ENCODE measurements at regions of chr5 and their contacts with region 1.

Region 1: GRCh38 chr5:181260387-181261319 is at the start of gene TRIM52:
- DNase-seq: peak; percentile 84 to 96 (median 89)
- ATAC-seq: peak; percentile 73
- H3K4me3 ChIP-seq: peak within 1 kb of the TSS; percentile 85
- H3K4me3 Mint-ChIP-seq: peak within 1 kb of the TSS; percentile 100
- H3K27ac ChIP-seq: peak within 1 kb of the TSS; percentile 98 to 99
- H3K27ac Mint-ChIP-seq: peak within 1 kb of the TSS; percentile 95
- H3K4me1 ChIP-seq: peaks cover 43% of the 10 kb centered on the region
- H3K4me1 Mint-ChIP-seq: peaks cover 54% of the 10 kb centered on the region
- H3K27me3 ChIP-seq: no peaks in the 10 kb centered on the region
- H3K27me3 Mint-ChIP-seq: no peaks in the 10 kb centered on the region
- CTCF ChIP-seq: no peak
- total RNA-seq, gene TRIM52: 35.9 to 37.6 TPM

Region 2: DNA sequence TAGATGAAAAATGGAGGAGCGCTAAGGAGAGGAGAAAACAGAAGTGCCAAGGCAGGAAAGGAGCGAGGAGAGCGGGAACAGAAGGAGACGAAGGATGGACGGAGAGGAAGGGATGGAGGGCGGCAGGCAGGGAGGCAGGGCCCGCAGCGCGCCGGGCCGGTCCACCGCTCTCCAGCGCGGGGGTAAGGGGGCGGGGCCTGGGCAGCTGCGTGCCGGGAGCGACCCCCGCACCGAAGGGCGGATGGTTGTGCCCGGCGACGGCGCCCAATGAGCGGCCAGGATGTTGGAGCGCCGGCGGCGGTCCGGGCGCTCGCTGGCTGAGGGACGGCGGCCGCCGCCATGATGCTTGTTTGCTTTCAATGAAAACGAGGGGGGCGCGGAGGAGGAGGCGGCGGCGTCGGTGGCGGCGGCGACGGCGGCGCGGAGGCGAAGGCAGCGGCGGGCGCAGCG is 766.6 kb before region 1 on chr5 and contains the start of gene CNOT6:
- CTCF ChIA-PET with region 1: no interaction called
- POLR2A ChIA-PET with region 1: no interaction called
- intact Hi-C with region 1: loop called in 1 of 2 experiments (anchors 10 kb)
- DNase-seq: peak; percentile 89 to 99 (median 94)
- ATAC-seq: peak; percentile 88
- H3K4me3 ChIP-seq: peak within 1 kb of the TSS; percentile 73
- H3K4me3 Mint-ChIP-seq: peak within 1 kb of the TSS; percentile 100
- H3K27ac ChIP-seq: peak within 1 kb of the TSS; percentile 60 to 83
- H3K27ac Mint-ChIP-seq: peak within 1 kb of the TSS; percentile 98
- H3K4me1 ChIP-seq: peaks cover 34% of the 10 kb centered on the region
- H3K4me1 Mint-ChIP-seq: peaks cover 40% of the 10 kb centered on the region
- H3K27me3 ChIP-seq: no peaks in the 10 kb centered on the region
- H3K27me3 Mint-ChIP-seq: no peaks in the 10 kb centered on the region
- CTCF ChIP-seq: no peak
- total RNA-seq, gene CNOT6: 12.5 to 13.8 TPM

Region 3: DNA sequence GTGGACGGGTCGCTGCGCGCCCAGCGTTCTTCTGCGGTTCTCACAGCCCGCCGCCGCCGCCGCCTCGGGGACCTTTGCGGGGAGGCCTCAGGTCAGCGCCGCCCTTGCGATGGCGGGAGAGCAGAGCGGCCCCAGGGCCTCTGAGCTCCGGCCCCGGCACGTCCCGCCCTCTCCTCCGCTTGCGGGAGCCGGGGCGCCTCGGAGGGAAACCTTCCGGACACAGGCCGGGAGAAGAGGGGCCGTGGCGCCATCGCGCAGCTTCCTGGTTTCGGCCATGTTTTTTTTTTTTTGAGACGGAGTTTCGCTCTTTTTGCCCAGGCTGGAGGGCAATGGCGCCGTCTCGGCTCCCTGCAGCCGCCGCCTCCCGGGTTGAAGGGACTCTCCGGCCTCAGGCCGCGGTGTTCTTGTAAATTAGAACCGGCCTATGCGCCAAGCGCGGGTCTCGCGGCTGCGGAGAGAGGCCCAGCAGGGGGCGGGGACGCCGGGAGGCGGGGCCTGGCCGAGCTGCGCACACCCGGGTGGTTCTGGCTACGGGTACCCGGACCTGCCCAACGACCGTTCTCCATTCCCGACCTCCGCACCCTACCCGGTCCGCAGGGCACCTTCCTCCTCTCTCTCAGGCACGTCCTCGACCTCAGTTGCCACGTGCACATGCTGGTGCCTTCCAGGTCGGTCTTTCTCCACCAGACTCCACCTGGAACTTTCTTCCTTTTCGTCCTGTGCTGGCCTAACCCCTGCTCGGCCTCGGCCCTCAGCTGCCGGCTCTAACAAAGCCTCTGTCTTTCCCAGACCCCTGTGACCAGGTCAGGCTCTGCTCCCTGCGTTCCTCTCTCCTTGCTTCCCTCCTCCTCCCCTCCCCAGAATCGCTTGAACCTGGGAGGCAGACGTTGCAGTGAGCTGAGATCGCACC is 429.3 kb before region 1 on chr5:
- CTCF ChIA-PET with region 1: no interaction called
- POLR2A ChIA-PET with region 1: interaction called, 18 read pairs
- intact Hi-C with region 1: no loop called
- DNase-seq: peak; percentile 57 to 86 (median 75)
- ATAC-seq: peak; percentile 45
- H3K4me3 ChIP-seq: peak overlapping the region; percentile 92
- H3K4me3 Mint-ChIP-seq: peak overlapping the region; percentile 99
- H3K27ac ChIP-seq: peak overlapping the region; percentile 94 to 96
- H3K27ac Mint-ChIP-seq: peak overlapping the region; percentile 99
- H3K4me1 ChIP-seq: peaks cover 54% of the 10 kb centered on the region
- H3K4me1 Mint-ChIP-seq: peaks cover 63% of the 10 kb centered on the region
- H3K27me3 ChIP-seq: no peaks in the 10 kb centered on the region
- H3K27me3 Mint-ChIP-seq: no peaks in the 10 kb centered on the region
- CTCF ChIP-seq: no peak

Region 4: GRCh38 chr5:181173420-181174342 is 87.0 kb before region 1 on chr5:
- CTCF ChIA-PET with region 1: no interaction called
- POLR2A ChIA-PET with region 1: interaction called, 13 read pairs
- intact Hi-C with region 1: no loop called
- DNase-seq: peak in 9 of 14 experiments; percentile 17 to 76 (median 55)
- ATAC-seq: peak; percentile 84
- H3K4me3 ChIP-seq: peak overlapping the region; percentile 25
- H3K4me3 Mint-ChIP-seq: peak overlapping the region; percentile 92
- H3K27ac ChIP-seq: no peak overlapping the region
- H3K27ac Mint-ChIP-seq: peak overlapping the region; percentile 78
- H3K4me1 ChIP-seq: peaks cover 33% of the 10 kb centered on the region
- H3K4me1 Mint-ChIP-seq: peaks cover 44% of the 10 kb centered on the region
- H3K27me3 ChIP-seq: peaks cover 21 to 45% of the 10 kb centered on the region in 2 experiments
- H3K27me3 Mint-ChIP-seq: peaks cover 44% of the 10 kb centered on the region
- CTCF ChIP-seq: peak; percentile 10

Region 5: GRCh38 chr5:181191529-181192394 is 68.9 kb before region 1 on chr5:
- CTCF ChIA-PET with region 1: no interaction called
- POLR2A ChIA-PET with region 1: interaction called, 139 read pairs
- intact Hi-C with region 1: loop called (anchors 1 kb)
- DNase-seq: peak; percentile 88 to 99 (median 96)
- ATAC-seq: peak; percentile 45
- H3K4me3 ChIP-seq: peak overlapping the region; percentile 89
- H3K4me3 Mint-ChIP-seq: peak overlapping the region; percentile 99
- H3K27ac ChIP-seq: peak overlapping the region; percentile 52 to 62
- H3K27ac Mint-ChIP-seq: peak overlapping the region; percentile 99
- H3K4me1 ChIP-seq: peaks cover 46% of the 10 kb centered on the region
- H3K4me1 Mint-ChIP-seq: peaks cover 47% of the 10 kb centered on the region
- H3K27me3 ChIP-seq: no peaks in the 10 kb centered on the region
- H3K27me3 Mint-ChIP-seq: peaks cover 35% of the 10 kb centered on the region
- CTCF ChIP-seq: no peak

Region 6: DNA sequence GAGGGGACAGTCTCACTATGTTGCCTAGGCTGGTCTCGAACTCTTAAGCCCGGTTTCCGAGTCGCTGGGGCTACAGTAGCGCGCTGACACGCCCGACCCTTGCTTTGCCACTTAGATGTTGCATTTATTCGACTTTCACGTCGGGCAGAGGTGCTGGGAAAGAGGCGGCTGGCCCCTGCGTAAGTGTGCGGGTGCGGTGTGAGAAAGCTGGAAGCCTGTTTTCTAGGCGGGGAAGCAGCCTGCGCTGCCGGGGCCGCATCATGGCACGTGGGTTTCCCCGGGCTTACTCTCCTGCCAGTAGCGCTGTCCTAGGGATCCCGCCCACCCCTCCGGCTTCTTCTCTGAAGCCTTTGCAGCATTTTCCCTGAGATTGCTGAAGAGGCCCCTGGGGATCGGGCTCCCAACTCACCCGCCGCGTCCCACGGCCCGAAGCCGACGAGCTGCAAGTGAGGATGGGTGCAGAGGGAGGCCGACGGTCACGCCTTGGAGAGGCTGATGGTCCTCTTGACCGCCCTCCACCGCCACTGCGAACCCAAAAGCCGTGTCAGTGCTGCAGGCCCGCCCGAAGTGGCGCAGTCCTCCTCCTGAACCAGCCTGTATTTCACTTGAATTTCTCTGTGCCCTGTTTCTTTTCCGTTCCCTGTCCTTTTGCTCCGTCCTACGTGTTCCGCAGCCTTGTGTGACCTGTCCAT is 43.4 kb before region 1 on chr5:
- CTCF ChIA-PET with region 1: interaction called, 3 read pairs
- POLR2A ChIA-PET with region 1: interaction called, 159 read pairs
- intact Hi-C with region 1: no loop called
- DNase-seq: peak; percentile 36 to 87 (median 61)
- ATAC-seq: peak; percentile 31
- H3K4me3 ChIP-seq: peak overlapping the region; percentile 81
- H3K4me3 Mint-ChIP-seq: peak overlapping the region; percentile 97
- H3K27ac ChIP-seq: peak overlapping the region; percentile 39 to 41
- H3K27ac Mint-ChIP-seq: peak overlapping the region; percentile 88
- H3K4me1 ChIP-seq: peaks cover 56% of the 10 kb centered on the region
- H3K4me1 Mint-ChIP-seq: peaks cover 41% of the 10 kb centered on the region
- H3K27me3 ChIP-seq: no peaks in the 10 kb centered on the region
- H3K27me3 Mint-ChIP-seq: peaks cover 20% of the 10 kb centered on the region
- CTCF ChIP-seq: no peak

Region 7: DNA sequence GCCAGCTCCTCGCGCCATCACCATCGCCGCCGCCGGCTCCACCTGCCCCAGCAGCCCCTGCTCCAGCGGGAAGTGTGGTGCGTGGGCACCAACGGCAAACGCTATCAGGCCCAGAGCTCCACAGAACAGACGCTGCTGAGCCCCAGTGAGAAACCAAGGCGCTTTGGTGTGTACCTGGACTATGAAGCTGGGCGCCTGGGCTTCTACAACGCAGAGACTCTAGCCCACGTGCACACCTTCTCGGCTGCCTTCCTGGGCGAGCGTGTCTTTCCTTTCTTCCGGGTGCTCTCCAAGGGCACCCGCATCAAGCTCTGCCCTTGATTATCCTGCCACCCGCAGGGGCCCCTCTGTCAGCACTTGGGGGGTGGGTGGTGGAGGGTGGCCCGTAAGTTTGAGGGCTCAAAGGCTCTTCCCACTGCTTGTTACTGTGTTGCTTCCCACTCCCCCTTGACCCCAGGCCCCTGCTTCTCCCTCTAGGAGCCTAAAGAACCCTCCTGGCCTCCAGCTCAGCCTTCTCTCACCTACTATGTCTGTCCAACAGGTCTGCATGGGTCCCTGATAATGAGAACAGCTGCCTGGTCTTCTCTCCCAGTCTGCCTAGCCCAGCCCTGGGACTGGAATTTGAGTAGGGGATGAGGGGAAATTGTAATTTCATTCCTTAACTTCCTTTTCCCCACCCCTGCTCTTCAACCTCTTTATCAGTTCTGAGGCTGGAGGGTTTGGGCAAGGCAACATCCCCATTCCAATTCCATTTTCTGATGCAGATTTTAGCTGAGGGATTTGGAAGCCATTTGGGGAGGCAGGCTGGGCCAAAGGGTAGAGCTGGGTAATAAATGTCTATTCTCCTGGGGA is 26.0 kb before region 1 on chr5:
- CTCF ChIA-PET with region 1: no interaction called
- POLR2A ChIA-PET with region 1: interaction called, 244 read pairs
- intact Hi-C with region 1: no loop called
- DNase-seq: peak in 1 of 14 experiments; percentile 17
- ATAC-seq: no peak
- H3K4me3 ChIP-seq: no peak overlapping the region
- H3K4me3 Mint-ChIP-seq: no peak overlapping the region
- H3K27ac ChIP-seq: no peak overlapping the region
- H3K27ac Mint-ChIP-seq: no peak overlapping the region
- H3K4me1 ChIP-seq: peaks cover 19% of the 10 kb centered on the region
- H3K4me1 Mint-ChIP-seq: peaks cover 40% of the 10 kb centered on the region
- H3K27me3 ChIP-seq: no peaks in the 10 kb centered on the region
- H3K27me3 Mint-ChIP-seq: no peaks in the 10 kb centered on the region
- CTCF ChIP-seq: no peak